ENCODE measurements at regions of chr16 and their contacts with region 1.

Region 1: DNA sequence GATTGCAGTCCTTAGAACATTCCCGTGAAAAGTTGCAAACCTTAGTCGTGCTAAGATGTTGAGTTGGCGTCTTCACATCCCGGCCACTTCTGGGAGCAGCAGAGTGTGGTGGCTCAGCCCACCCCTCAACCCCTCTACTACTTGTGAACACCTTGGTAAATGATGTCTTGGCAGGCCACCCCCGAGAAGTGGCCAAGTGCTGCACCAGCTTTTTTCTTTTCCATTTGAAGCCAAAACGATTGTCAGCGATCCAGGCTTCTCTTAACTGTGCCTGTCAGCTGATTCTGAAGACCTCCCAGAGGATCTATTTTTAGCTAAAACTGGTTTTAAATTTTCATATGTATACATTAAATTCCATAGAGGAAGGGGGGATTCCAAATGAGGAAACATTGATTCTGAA is 247.5 kb downstream of the CDH13 start:
- DNase-seq: no peak
- ATAC-seq: no peak
- H3K4me3 ChIP-seq: no peak overlapping the region
- H3K27ac ChIP-seq: peak overlapping the region; percentile 43 to 48
- H3K4me1 ChIP-seq: peaks cover 0 to 10% of the 10 kb centered on the region in 2 donors
- H3K27me3 ChIP-seq: no peaks in the 10 kb centered on the region

Region 2: GRCh38 chr16:82639666-82640336 is 234.5 kb before region 1 on chr16:
- intact Hi-C with region 1: loop called in 1 of 2 experiments (anchors 10 kb)
- DNase-seq: peak in 1 of 2 donors; percentile 80
- ATAC-seq: no peak
- H3K4me3 ChIP-seq: no peak overlapping the region
- H3K27ac ChIP-seq: no peak overlapping the region
- H3K4me1 ChIP-seq: no peaks in the 10 kb centered on the region
- H3K27me3 ChIP-seq: no peaks in the 10 kb centered on the region

Region 3: DNA sequence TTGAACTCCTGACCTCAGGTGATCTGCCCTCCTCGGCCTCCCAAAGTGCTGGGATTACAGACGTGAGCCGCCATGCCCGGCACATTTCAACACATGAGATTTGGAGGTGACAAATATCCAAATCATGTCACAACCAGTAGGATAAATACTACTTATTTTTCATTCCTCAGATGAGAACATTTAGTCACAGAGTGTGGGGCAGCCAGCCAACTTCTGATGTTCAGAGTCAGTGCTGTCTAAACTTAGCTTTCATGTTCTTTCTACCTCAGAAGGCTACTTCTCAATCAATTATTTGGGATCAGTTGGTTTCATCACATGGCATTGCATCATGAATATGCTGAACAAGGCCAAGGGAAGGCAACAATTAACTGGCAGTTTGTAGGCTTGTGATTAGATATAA is 113.0 kb before region 1 on chr16:
- intact Hi-C with region 1: loop called in 1 of 2 experiments (anchors 10 kb)
- DNase-seq: peak; percentile 84 to 93
- ATAC-seq: peak; percentile 75
- H3K4me3 ChIP-seq: peak overlapping the region in 1 of 2 donors; percentile 21
- H3K27ac ChIP-seq: peak overlapping the region in 1 of 2 donors; percentile 75
- H3K4me1 ChIP-seq: peaks cover 7 to 13% of the 10 kb centered on the region in 2 donors
- H3K27me3 ChIP-seq: no peaks in the 10 kb centered on the region

Region 4: GRCh38 chr16:82924075-82924854 is 50.0 kb after region 1 on chr16:
- intact Hi-C with region 1: no loop called
- DNase-seq: no peak
- ATAC-seq: no peak
- H3K4me3 ChIP-seq: no peak overlapping the region
- H3K27ac ChIP-seq: no peak overlapping the region
- H3K4me1 ChIP-seq: no peaks in the 10 kb centered on the region
- H3K27me3 ChIP-seq: no peaks in the 10 kb centered on the region